Activated CD4-positive, alpha-beta T cell treated with anti-CD3 and anti-CD28 coated beads, Interleukin-2, amount 10 ng/mL, durations not matched to agents 24 days and 14 days (primary cell): ENCODE measurements at regions of chr15 and their contacts with region 1.

Region 1: DNA sequence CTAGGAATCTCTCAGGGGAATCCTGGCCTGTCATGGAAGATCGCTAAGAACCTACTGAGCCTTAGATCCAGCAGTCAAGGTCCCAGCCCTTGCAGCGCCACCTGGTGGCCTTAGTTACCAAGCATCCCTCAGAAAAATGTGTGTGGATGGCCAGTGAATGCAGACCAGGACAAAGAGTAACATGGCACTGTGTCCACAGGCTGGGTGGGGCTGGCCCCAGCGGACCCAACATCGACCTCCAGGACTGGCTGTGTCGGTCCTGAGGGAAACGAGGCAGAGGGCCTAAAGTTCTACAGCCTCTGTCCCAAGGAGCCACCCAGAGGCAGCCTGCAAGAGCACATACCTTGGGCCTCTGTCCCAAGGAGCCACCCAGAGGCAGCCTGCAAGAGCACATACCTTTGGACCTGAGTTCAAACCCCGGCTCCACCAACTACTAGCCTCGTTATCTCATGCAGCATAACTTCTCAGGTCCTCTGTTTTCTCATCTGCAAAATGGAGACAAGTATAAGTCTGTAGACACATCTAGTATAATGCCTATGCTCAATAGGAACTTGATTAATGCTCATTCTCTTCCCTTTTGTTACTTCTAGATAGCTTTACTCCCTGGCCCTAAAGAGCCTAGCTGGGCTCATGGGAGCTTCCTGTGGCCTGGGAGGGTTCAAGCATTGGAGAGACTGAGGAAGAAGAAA is 57.5 kb upstream of the HERC1 start:
- DNase-seq: peak; percentile 92
- H3K4me3 Mint-ChIP-seq: peak overlapping the region; percentile 68
- H3K27ac Mint-ChIP-seq: peak overlapping the region; percentile 27
- H3K4me1 Mint-ChIP-seq: peaks cover 53% of the 10 kb centered on the region
- H3K27me3 Mint-ChIP-seq: no peaks in the 10 kb centered on the region

Region 2: DNA sequence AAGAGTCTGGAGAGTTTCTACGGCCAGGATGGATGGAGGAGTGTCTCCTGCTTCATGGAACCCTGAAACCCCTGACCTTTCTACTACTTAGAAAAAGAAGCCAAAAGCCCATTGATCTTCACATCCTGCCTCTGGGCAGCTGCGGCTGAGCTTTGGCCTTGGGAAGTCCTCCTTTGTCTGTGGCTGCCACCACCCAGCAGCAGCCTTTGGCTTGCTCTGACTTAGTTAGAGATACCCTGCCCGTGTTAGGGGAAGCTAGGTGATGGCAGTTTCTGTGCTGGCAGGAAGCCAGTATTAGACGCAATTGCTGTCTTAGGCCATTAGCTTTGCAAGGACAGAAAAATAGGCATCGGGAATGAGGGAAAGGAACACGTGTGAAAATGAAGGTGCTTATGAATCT is 595.0 kb before region 1 on chr15:
- intact Hi-C with region 1: no loop called
- DNase-seq: no peak
- H3K4me3 Mint-ChIP-seq: no peak overlapping the region
- H3K27ac Mint-ChIP-seq: no peak overlapping the region
- H3K4me1 Mint-ChIP-seq: no peaks in the 10 kb centered on the region
- H3K27me3 Mint-ChIP-seq: no peaks in the 10 kb centered on the region

Region 3: GRCh38 chr15:63610200-63610841 is 280.9 kb before region 1 on chr15:
- intact Hi-C with region 1: loop called (anchors 2 kb)
- DNase-seq: peak; percentile 93
- H3K4me3 Mint-ChIP-seq: peak overlapping the region; percentile 32
- H3K27ac Mint-ChIP-seq: peak overlapping the region; percentile 92
- H3K4me1 Mint-ChIP-seq: peaks cover 27% of the 10 kb centered on the region
- H3K27me3 Mint-ChIP-seq: no peaks in the 10 kb centered on the region

Region 4: GRCh38 chr15:63752075-63752684 is 139.0 kb before region 1 on chr15:
- intact Hi-C with region 1: loop called (anchors 1 kb)
- DNase-seq: peak; percentile 85
- H3K4me3 Mint-ChIP-seq: no peak overlapping the region
- H3K27ac Mint-ChIP-seq: peak overlapping the region; percentile 44
- H3K4me1 Mint-ChIP-seq: peaks cover 8% of the 10 kb centered on the region
- H3K27me3 Mint-ChIP-seq: no peaks in the 10 kb centered on the region

Region 5: GRCh38 chr15:63833021-63833696 is 58.1 kb before region 1 on chr15:
- intact Hi-C with region 1: loop called (anchors 1 kb)
- DNase-seq: peak; percentile 84
- H3K4me3 Mint-ChIP-seq: peak overlapping the region; percentile 99
- H3K27ac Mint-ChIP-seq: peak overlapping the region; percentile 100
- H3K4me1 Mint-ChIP-seq: peaks cover 46% of the 10 kb centered on the region
- H3K27me3 Mint-ChIP-seq: peaks cover 6% of the 10 kb centered on the region

Region 6: GRCh38 chr15:64010719-64011118 is 119.5 kb after region 1 on chr15:
- intact Hi-C with region 1: loop called (anchors 1 kb)
- DNase-seq: peak; percentile 94
- H3K4me3 Mint-ChIP-seq: peak overlapping the region; percentile 72
- H3K27ac Mint-ChIP-seq: peak overlapping the region; percentile 88
- H3K4me1 Mint-ChIP-seq: peaks cover 52% of the 10 kb centered on the region
- H3K27me3 Mint-ChIP-seq: no peaks in the 10 kb centered on the region

Region 7: DNA sequence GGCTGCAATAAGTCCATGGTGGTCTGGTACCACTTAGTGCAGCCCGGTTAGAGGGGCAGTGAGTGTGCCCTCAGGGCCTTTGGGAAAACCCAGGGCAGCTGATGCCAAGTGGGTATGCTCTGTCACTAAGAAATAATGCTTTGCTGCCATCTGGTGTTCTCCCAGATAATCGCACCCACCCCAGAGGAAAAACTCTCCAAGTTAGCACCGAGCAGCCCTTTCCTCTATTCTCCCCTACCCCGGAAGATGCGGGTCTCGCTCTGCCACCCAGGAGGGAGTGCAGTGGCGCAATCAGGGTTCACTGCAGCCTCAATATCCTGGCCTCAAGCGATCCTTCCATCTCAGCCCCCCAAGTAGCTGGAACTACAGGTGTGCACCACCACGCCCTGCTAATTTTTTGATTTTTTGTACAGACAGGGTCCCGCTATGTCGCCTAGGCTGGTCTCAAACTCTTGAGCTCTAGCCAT is 176.4 kb after region 1 on chr15:
- intact Hi-C with region 1: loop called (anchors 2 kb)
- DNase-seq: peak; percentile 92
- H3K4me3 Mint-ChIP-seq: no peak overlapping the region
- H3K27ac Mint-ChIP-seq: no peak overlapping the region
- H3K4me1 Mint-ChIP-seq: peaks cover 7% of the 10 kb centered on the region
- H3K27me3 Mint-ChIP-seq: no peaks in the 10 kb centered on the region